ENCODE measurements at regions of chr2 and their contacts with region 1.

Region 1: DNA sequence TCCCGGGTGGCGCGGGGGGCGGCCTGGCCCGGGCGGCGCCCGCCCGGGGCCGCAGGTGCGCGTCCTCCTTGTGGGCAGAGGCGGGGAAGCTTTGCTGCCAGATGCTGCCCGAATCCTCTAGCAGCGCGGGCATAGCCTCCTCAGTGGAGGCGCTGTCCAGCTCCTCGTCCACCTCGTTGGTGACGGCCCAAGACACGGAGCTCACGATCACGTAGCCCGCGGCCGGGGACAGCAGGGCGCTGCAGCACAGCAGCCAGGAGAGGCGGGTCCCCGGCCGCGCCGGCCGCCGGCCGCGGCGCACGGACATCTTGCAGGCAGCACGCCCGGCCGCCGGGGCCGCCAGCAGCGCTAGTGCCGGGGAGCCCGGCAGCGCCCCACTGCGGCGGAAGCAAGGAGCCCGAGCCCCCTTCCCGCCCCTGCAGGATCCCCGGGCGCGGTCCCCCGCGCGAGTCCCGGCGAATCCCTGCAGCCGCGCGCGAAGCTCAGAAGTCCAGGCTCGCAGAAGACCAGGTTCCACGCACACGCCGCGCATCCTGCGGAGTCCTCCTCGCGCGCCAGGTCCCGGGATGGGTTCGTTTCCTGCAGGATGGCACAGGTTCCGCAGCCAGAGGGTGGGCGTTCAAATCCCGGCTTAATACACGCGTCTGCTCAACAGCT is at the start of gene CREG2:
- DNase-seq: peak; percentile 86
- H3K4me3 Mint-ChIP-seq: peak within 1 kb of the TSS; percentile 74
- H3K27ac Mint-ChIP-seq: no peak within 1 kb of the TSS
- H3K4me1 Mint-ChIP-seq: no peaks in the 10 kb centered on the region
- H3K27me3 Mint-ChIP-seq: peaks cover 12% of the 10 kb centered on the region
- CTCF ChIP-seq: no peak
- total RNA-seq, gene CREG2: 1.3 and 2.4 TPM in 2 replicates

Region 2: GRCh38 chr2:101272045-101272784 is 115.1 kb before region 1 on chr2:
- CTCF ChIA-PET with region 1: interaction called, 3 read pairs
- intact Hi-C with region 1: loop called (anchors 10 kb)
- DNase-seq: no peak
- H3K4me3 Mint-ChIP-seq: no peak overlapping the region
- H3K27ac Mint-ChIP-seq: peak overlapping the region; percentile 44
- H3K4me1 Mint-ChIP-seq: peaks cover 15% of the 10 kb centered on the region
- H3K27me3 Mint-ChIP-seq: no peaks in the 10 kb centered on the region
- CTCF ChIP-seq: no peak

Region 3: GRCh38 chr2:102498414-102498813 is 1111.1 kb after region 1 on chr2:
- CTCF ChIA-PET with region 1: no interaction called
- intact Hi-C with region 1: no loop called
- DNase-seq: no peak
- H3K4me3 Mint-ChIP-seq: no peak overlapping the region
- H3K27ac Mint-ChIP-seq: no peak overlapping the region
- H3K4me1 Mint-ChIP-seq: peaks cover 24% of the 10 kb centered on the region
- H3K27me3 Mint-ChIP-seq: no peaks in the 10 kb centered on the region
- CTCF ChIP-seq: no peak

Measured in Calu3 (cell line).